ENCODE measurements at regions of chr2 and their contacts with region 1.

Region 1: DNA sequence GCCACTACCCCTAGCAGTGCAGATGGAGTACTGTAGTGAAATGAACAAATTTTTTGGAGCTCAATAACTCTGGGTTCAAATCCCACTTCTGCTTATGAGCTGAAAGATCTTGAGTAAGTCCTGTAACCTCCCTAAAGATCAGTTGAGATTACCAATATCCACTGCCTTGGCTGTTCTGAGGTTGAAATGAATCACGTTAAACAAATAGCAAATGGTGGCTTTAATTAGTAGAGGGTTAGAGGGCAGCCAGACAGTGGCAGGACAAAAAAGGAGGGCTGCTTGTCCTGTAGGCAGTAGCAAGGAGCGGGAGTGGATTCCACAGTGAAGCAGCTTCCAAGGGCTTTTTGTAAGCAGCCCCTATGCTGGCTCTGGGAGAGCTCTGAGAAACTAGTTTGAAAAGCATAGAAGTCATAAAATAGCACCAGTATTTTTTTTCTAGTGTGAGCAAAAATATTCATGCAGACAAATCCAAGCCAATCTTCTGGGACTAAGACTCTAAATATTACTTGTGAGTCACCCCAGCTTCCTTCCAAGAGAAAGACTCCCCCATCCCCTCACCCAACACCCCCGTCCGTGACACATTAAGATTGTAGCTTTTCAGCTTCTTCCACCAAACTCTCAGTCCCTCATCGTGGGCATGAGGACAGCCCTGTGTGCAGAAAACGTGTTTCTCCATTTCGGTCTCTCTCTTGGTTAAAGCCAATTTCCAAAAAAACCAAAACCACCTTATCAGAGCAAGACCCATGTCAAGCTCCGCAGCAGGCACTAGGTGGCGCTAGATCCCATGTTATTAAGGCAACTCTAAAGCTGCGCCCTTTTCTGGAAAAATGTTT is 123.5 kb upstream of the LGALSL start:
- DNase-seq: peak; percentile 92
- H3K4me3 ChIP-seq: peak overlapping the region; percentile 29
- H3K27ac ChIP-seq: no peak overlapping the region
- H3K4me1 ChIP-seq: peaks cover 58% of the 10 kb centered on the region
- CTCF ChIP-seq: peak; percentile 99

Region 2: DNA sequence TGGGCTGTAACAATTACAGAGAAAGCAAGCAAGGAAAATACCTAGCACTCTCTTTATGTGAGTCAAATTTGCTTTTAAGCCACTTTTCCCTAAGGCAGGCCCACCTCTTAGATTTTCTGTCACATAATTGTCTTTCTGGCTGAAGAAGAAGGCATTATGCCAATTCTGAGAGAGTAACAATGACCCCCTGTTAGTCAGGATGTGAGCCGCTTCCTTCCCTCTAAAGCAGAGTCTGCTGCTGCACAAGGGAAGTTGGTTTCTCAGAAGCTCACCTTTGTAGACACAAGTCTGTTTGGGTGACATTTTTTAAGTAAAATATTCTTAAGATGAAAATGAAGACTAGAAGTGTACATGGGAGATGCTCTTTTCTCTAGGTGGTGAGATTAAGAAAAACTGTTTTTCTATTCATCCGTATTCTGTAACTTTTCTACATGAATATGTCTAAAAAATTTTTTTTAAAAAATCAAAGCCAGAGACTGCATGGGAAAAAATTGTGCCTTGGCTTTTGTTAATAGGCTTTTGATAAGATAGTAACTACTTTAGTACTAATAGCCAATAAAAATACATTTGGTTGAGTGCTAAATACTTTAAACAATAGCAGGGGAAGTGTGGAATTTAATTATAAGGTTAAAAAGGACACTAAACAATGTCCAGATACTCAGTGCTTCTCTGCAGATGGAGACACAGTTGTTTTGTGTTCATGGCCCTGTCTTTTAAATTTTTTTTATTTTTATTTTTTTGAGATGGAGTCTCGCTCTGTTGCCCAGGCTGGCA is 277.8 kb before region 1 on chr2:
- CTCF ChIA-PET with region 1: interaction called, 6 read pairs
- POLR2A ChIA-PET with region 1: interaction called, 20 read pairs
- intact Hi-C with region 1: loop called (anchors 1 kb)
- DNase-seq: peak; percentile 83
- H3K4me3 ChIP-seq: peak overlapping the region; percentile 11
- H3K27ac ChIP-seq: peak overlapping the region; percentile 96
- H3K4me1 ChIP-seq: peaks cover 84% of the 10 kb centered on the region
- CTCF ChIP-seq: no peak

Region 3: DNA sequence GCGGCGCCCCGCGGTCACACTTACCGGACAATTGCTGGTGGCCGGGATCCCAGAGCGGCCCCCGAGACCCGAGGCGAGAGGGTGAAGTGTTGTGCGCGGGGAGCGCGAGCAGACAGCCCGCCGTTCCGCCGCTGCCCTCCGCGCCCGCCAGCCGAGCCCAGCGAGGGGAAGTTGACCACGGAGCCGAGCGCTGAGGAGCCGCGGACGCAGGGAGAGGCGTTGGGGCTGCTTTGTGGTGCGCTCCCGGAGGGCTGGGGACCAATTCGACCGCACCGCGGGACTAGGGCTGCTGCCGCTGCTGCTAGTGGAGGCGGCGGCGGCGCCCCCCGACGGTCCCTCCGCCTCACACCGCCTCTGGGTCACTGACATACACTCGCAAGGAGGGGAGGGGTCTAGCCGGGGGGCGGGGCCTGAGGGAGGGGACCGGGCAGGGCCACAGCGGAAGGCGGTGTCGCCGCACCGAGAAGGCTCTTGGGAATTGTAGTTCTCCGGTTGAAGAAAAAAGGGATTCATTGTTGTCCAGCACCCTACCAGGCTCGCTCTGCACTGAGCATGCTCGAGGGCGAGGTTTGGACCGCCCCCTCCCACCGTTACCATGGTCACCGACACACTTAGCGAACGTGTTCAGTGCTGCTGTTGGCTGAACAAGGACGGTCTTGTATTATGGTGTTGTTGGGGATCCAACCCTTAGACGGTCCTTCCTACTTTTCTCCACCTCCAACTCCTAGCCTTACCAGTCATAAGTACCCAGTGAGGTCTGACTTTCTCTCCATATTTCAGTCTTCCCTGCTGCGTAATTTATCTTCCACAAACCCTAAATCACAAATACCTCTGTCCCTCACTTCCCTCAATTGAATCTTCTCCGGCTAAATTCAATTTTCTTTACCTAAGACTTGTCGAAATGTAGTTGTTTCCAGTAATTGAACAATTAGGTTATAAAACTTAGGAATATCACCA is 186.2 kb before region 1 on chr2 and contains the start of gene PELI1:
- CTCF ChIA-PET with region 1: interaction called, 5 read pairs
- POLR2A ChIA-PET with region 1: no interaction called
- intact Hi-C with region 1: loop called (anchors 2 kb)
- DNase-seq: peak; percentile 99
- H3K4me3 ChIP-seq: peak within 1 kb of the TSS; percentile 97
- H3K27ac ChIP-seq: peak within 1 kb of the TSS; percentile 80
- H3K4me1 ChIP-seq: peaks cover 41% of the 10 kb centered on the region
- CTCF ChIP-seq: peak; percentile 68; the same call in 1 of the 2 replicates
- total RNA-seq, gene PELI1: 108 and 110 TPM in 2 replicates

Region 4: DNA sequence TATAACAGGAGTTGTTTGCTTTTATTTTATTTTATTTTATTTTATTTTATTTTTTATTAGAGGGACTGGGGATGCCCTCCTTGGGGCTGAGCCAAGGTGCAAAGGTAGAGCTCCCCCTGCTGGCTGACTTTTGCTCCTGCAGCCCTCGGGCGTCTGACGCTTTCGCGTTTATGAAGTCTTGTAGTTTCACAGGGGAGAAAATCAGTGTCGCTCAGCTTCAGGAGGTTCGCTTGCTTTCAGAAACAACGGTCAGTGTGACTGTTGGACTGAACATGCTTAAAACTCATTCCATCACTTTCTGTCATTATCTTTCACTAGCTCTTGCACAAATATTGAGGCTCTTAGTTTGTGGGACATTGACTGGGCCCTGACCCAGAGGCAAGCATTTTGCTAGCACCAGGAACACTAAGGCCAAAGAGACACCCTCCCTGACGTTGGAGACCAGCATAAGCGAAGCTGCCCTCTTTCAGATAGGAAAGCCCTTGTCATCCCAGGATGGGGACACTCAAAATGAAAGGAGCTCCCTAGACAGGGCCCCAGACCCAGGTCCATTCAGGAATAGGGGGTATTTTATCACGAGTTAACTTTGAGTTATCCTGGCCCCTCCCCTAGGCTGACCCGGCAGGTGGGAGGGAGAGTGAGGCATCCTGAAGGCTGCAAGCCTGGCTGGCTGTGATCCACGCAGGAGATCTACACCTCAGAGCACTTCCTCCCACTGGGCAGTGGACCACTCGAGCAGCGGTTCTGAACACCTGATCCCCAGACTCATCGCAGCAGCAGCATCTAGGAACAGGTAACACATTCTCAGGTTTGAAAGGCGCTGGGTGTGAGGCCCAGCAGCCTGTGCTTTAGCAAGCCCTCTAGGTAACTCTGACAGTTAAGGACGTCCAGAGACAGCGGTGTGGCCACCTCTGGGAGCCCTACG is 157.8 kb after region 1 on chr2:
- CTCF ChIA-PET with region 1: interaction called, 7 read pairs
- POLR2A ChIA-PET with region 1: interaction called, 5 read pairs
- intact Hi-C with region 1: loop called (anchors 1 kb)
- DNase-seq: peak; percentile 80
- H3K4me3 ChIP-seq: no peak overlapping the region
- H3K27ac ChIP-seq: no peak overlapping the region
- H3K4me1 ChIP-seq: no peaks in the 10 kb centered on the region
- CTCF ChIP-seq: peak; percentile 98

Region 5: DNA sequence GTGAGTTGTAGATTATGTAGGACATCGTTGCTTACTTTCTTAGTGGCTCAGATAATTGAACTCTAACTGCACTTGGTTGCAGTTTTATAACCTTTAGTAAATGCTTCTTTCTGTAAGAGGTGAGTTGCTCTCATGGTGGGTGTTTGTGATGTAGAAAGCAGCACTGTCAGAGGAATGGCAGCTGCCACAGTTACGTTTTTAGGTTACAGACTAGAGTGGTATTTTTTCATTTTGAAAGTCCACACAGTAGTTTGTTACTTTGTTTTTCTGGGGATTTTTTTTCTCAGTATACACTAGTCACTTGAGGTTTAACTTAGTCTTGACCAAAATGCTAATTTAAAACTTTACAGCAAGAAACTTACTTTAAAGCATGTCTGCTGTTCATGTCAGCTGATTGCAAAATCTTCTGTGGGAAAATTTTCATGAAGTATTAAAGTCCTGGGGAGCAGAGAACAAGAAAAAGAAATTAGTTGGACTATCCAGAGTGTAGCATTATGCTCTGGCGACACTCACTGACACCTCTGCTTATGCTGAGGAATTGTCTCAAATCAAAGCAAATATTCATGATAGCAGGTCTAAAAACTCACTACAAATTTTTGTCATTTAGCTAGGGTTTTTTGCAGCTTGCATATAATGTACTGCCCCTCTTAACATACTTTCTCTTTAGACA is 208.4 kb after region 1 on chr2:
- CTCF ChIA-PET with region 1: no interaction called
- POLR2A ChIA-PET with region 1: no interaction called
- intact Hi-C with region 1: no loop called
- DNase-seq: no peak
- H3K4me3 ChIP-seq: no peak overlapping the region
- H3K27ac ChIP-seq: no peak overlapping the region
- H3K4me1 ChIP-seq: peaks cover 10% of the 10 kb centered on the region
- CTCF ChIP-seq: no peak

Region 6: GRCh38 chr2:64622443-64623241 is 292.1 kb after region 1 on chr2:
- CTCF ChIA-PET with region 1: no interaction called
- POLR2A ChIA-PET with region 1: interaction called, 3 read pairs
- intact Hi-C with region 1: loop called (anchors 10 kb)
- DNase-seq: no peak
- H3K4me3 ChIP-seq: no peak overlapping the region
- H3K27ac ChIP-seq: no peak overlapping the region
- H3K4me1 ChIP-seq: peaks cover 17% of the 10 kb centered on the region
- CTCF ChIP-seq: no peak; the same call in 1 of the 2 replicates

Region 7: DNA sequence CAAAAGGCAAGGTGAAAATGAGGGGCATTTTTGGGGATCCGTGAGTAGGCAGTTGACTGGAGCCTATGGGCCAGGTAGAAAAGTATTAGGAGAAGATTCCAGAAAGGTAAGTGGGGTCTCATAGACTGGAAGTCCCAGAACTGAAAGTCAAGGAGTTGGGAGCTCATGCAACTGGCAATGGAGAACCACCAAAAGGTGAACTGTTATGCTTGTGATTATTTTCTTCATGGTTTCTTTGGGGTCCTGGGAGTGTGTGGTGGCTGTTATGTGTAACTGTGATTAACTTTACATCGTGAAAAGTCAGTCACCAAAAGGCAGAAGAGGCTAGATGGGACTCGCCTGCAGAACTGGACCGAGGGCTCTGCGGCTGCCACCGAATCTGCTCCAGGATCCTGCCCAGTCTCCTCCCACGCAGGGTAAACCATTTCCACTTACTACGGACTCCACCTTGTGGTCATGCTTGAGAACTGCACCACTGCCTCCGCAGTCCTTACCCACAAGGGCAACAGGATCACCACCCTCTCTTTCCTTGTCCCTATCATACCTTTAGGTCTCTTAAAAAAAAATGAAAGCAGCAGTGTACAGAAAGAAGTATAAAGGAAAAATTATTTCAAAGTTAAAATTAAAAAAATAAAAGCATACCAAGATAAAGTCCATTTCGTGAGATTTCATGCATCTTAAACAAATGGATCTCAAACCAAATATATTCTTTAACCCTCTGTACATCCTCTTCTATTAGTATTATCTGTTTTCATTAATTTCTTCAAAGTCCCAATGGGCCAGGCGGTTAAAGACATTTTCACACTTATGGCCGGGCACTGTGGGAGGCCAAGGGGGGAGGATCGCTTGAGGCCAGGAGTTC is 710.1 kb after region 1 on chr2:
- CTCF ChIA-PET with region 1: no interaction called
- POLR2A ChIA-PET with region 1: no interaction called
- intact Hi-C with region 1: loop called (anchors 5 kb)
- DNase-seq: peak; percentile 85
- H3K4me3 ChIP-seq: no peak overlapping the region
- H3K27ac ChIP-seq: no peak overlapping the region
- H3K4me1 ChIP-seq: peaks cover 9% of the 10 kb centered on the region
- CTCF ChIP-seq: peak; percentile 98

Measured in OCI-LY7 (cell line).